ENCODE measurements at regions of chr1 and their contacts with region 1.

Region 1: GRCh38 chr1:209989525-209989924 is 51.5 kb downstream of the SYT14 start:
- DNase-seq: no peak
- H3K4me3 ChIP-seq: no peak overlapping the region
- H3K27ac ChIP-seq: no peak overlapping the region
- H3K4me1 ChIP-seq: no peaks in the 10 kb centered on the region
- H3K27me3 ChIP-seq: no peaks in the 10 kb centered on the region
- CTCF ChIP-seq: peak in 1 of 3 experiments; percentile 24
- POLR2A ChIP-seq: no peak

Region 2: DNA sequence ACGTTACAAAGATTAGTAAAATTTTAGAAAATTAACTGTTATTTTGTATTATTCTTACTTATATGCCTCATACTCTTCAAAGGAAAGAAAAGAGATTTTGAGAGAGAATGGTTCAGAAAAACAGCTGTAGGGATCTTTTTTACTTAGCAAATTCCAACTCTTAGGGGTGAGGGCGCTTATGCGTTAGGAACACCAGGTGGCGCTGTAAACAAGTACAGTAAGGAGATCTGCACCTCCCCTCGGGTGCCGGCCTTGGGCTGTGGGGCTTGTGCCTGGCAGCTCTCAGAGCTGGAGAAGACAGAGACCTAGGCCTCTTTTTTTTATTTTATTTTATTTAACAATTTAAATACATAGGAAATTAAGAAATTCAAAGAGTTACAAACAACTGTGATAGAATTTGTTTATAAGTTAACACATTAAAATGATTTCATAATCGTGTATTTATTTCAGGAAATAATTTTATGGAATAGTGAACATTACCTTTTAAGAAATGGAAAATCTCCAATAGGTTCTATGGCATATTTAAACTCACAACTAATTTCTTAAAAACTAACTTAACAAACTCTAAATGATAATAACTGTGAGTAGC is 129.1 kb before region 1 on chr1:
- intact Hi-C with region 1: loop called (anchors 10 kb)
- DNase-seq: peak; percentile 93
- H3K4me3 ChIP-seq: no peak overlapping the region
- H3K27ac ChIP-seq: no peak overlapping the region
- H3K4me1 ChIP-seq: no peaks in the 10 kb centered on the region
- H3K27me3 ChIP-seq: no peaks in the 10 kb centered on the region
- CTCF ChIP-seq: peak; percentile 50 to 94 (median 78)
- POLR2A ChIP-seq: no peak

Measured in testis (tissue), 5 donors.